ENCODE measurements at regions of chr9 and their contacts with region 1.

Region 1: GRCh38 chr9:135500525-135501358 is at the start of gene MRPS2:
- DNase-seq: peak; percentile 86 to 89
- ATAC-seq: peak; percentile 86 to 95
- H3K4me3 ChIP-seq: peak within 1 kb of the TSS; percentile 100
- H3K27ac ChIP-seq: peak within 1 kb of the TSS; percentile 99
- H3K4me1 ChIP-seq: peaks cover 17% of the 10 kb centered on the region
- CTCF ChIP-seq: peak; percentile 80
- EP300 ChIP-seq: no peak
- POLR2A ChIP-seq: peak; percentile 83
- RAD21 ChIP-seq: no peak
- polyA plus RNA-seq, gene MRPS2: 66.9 and 75.5 TPM in 2 replicates

Region 2: DNA sequence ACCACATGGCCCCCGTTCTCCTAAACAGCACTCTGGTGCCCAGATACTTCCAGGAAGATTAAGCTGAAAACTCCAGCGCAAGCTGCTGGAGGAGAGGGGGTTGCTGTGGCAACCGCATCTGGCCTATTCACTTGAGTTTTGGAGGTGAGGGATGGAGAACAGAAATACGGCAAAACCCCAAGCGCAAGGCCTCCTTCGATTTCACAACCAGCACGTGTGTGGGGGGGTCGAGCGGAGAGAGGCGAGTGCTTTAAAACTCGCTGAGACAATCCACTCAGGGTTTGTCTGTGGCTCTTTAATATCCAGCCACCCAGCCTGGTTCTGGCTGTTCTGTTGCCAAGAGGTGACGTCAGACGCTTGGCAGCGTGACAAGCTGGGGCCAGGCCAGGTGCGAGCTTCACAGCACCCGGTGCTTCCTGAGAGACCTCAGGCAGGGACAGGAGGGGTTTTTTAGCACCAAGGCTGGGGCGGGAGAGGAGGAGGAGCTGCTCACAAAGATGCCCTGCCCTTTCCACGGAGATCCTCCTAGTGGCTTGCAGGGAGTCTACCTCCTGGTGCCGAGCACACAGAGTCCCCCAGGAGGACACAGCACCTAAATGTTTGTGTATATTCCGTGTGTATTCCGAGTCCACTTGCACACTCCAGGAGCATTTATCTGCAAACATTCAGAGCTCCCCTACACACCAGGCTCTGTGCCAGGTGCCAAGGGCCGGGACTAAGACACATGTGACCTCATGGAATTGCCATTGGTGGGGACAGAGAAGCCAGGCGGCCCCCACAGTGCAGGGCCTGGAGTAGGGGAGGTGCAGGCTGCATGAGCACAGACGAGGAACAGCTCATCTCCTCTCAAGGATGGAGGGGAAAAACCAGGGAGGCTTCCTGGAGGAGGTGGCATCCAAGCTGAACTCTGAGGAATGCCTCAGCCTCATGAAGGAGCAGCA is 218.7 kb before region 1 on chr9:
- CTCF ChIA-PET with region 1: no interaction called
- POLR2A ChIA-PET with region 1: no interaction called
- DNase-seq: peak; percentile 26 to 27
- ATAC-seq: peak in 1 of 2 experiments; percentile 41; a peak in 3 of 6 replicates
- H3K4me3 ChIP-seq: no peak overlapping the region
- H3K27ac ChIP-seq: no peak overlapping the region
- H3K4me1 ChIP-seq: peaks cover 6% of the 10 kb centered on the region; the same call in 1 of the 3 replicates
- CTCF ChIP-seq: no peak
- EP300 ChIP-seq: no peak
- POLR2A ChIP-seq: no peak
- RAD21 ChIP-seq: no peak

Region 3: GRCh38 chr9:135474915-135475314 is 25.8 kb before region 1 on chr9:
- CTCF ChIA-PET with region 1: interaction called, 24 read pairs
- POLR2A ChIA-PET with region 1: no interaction called
- DNase-seq: peak; percentile 60 to 64
- ATAC-seq: peak; percentile 57 to 88; a peak in 4 of 6 replicates
- H3K4me3 ChIP-seq: no peak overlapping the region
- H3K27ac ChIP-seq: no peak overlapping the region
- H3K4me1 ChIP-seq: no peaks in the 10 kb centered on the region
- CTCF ChIP-seq: peak; percentile 46
- EP300 ChIP-seq: no peak
- POLR2A ChIP-seq: no peak
- RAD21 ChIP-seq: peak; percentile 23 to 40; a peak in 3 of 5 replicates

Region 4: DNA sequence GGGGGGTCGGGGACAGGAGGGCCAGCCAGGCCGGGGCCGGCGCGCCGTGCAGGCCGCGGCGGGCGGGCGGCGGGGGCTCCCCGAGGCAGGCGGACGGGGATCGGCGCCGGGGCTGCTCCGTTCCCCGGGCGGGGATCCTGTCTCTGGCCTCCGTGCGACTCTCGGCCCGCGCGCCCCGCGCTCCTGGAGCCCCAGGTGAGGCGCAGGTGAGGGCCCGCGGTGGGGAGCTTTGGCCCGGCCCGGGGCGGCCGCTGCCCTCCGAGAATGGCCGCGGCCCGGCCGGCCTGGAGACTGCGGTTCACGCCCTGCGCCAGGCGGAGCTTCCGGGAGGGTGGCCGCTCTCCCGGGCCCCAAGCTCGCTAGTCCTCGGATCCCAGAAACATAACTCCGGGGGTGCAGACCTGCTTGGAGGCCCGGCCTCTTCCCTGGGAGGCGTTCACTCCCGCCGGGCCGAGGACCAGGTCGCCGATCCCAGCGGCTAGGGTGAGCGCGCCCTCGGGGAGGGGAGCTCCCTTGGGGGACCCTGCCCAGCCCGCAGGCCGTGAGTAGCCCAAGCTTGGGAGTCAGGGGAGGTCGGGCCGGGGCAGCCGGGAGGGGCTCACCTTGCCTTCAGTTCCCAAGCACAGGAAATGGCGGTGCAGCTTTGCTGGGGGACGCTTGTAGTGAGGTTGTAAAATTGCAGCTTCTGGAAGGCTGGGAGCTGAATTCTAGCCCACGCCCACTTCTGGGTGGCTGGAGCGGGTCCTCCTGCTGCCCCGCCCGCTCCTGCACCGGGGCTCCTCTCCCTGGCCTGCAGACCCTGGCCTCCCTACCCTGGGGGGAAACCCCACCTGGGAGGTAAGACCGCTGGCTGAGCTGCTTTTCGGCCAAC is 20.4 kb before region 1 on chr9:
- CTCF ChIA-PET with region 1: interaction called, 24 read pairs
- POLR2A ChIA-PET with region 1: interaction called, 3 read pairs
- DNase-seq: peak; percentile 50 to 54
- ATAC-seq: peak; percentile 65 to 86
- H3K4me3 ChIP-seq: peak overlapping the region; percentile 84
- H3K27ac ChIP-seq: peak overlapping the region; percentile 86 to 99
- H3K4me1 ChIP-seq: peaks cover 7% of the 10 kb centered on the region
- CTCF ChIP-seq: no peak
- EP300 ChIP-seq: no peak
- POLR2A ChIP-seq: no peak
- RAD21 ChIP-seq: no peak

Region 5: DNA sequence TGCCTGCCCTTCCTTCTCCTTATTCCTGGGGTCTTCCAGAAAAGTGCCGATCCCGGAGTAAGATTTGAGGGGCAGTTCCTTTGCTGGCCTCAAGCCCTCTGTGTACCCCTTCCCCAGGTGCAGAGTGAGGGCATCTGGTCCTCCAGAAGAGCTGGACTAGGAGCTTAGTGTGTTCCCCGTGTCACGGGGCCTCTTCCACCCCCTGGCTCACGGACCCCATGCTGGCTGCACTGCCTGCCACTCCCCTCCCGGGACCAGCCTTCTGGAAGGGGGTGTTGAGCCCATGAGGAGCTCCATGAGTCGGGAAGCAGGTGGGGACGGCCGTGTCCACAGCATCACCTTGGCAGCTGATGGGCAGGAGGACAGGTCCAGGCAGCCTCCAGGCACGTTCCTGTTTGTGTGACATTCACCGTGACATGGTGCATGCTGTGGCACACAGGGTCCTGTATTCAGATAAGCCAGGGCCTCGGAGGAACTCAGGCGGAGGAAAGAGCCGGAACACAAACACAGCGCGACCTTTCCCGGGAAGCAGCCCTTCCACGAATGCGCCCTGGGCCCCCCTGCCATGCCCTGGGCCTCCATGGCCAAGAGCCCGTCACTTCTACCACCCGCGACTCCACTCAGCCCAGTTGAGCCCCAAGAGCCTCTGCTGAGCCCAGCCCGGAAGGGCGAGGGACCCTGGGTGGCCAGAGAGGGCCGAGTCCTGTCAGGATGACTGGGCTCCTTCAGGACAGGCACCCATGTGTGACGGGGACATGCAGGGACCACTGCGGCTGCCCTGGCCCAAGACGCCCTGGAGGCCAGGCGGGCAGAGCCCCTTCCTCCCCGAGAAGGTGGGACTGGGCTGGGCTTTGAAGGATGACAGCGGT is 14.6 kb after region 1 on chr9:
- CTCF ChIA-PET with region 1: interaction called, 10 read pairs
- POLR2A ChIA-PET with region 1: no interaction called
- DNase-seq: no peak
- ATAC-seq: no peak
- H3K4me3 ChIP-seq: no peak overlapping the region
- H3K27ac ChIP-seq: no peak overlapping the region
- H3K4me1 ChIP-seq: no peaks in the 10 kb centered on the region
- CTCF ChIP-seq: no peak
- EP300 ChIP-seq: no peak
- POLR2A ChIP-seq: no peak
- RAD21 ChIP-seq: no peak

Region 6: GRCh38 chr9:136011703-136012521 is 511.2 kb after region 1 on chr9:
- CTCF ChIA-PET with region 1: no interaction called
- POLR2A ChIA-PET with region 1: no interaction called
- DNase-seq: no peak
- ATAC-seq: peak in 1 of 2 experiments; percentile 12; a peak in 2 of 6 replicates
- H3K4me3 ChIP-seq: no peak overlapping the region
- H3K27ac ChIP-seq: peak overlapping the region; percentile 17; a peak in 2 of 6 replicates
- H3K4me1 ChIP-seq: peaks cover 44% of the 10 kb centered on the region
- CTCF ChIP-seq: no peak
- EP300 ChIP-seq: no peak
- POLR2A ChIP-seq: no peak
- RAD21 ChIP-seq: no peak

Measured in A549 (cell line).